Panc1 (cell line): ENCODE measurements at regions of chr4 and their contacts with region 1.

Region 1: GRCh38 chr4:76758290-76758882 is 139.6 kb downstream of the SOWAHB start:
- DNase-seq: no peak
- ATAC-seq: no peak
- H3K4me3 ChIP-seq: no peak overlapping the region
- H3K27ac ChIP-seq: no peak overlapping the region
- H3K4me1 ChIP-seq: no peaks in the 10 kb centered on the region; the same call in 1 of the 2 replicates
- H3K27me3 ChIP-seq: no peaks in the 10 kb centered on the region
- CTCF ChIP-seq: peak; percentile 79

Region 2: DNA sequence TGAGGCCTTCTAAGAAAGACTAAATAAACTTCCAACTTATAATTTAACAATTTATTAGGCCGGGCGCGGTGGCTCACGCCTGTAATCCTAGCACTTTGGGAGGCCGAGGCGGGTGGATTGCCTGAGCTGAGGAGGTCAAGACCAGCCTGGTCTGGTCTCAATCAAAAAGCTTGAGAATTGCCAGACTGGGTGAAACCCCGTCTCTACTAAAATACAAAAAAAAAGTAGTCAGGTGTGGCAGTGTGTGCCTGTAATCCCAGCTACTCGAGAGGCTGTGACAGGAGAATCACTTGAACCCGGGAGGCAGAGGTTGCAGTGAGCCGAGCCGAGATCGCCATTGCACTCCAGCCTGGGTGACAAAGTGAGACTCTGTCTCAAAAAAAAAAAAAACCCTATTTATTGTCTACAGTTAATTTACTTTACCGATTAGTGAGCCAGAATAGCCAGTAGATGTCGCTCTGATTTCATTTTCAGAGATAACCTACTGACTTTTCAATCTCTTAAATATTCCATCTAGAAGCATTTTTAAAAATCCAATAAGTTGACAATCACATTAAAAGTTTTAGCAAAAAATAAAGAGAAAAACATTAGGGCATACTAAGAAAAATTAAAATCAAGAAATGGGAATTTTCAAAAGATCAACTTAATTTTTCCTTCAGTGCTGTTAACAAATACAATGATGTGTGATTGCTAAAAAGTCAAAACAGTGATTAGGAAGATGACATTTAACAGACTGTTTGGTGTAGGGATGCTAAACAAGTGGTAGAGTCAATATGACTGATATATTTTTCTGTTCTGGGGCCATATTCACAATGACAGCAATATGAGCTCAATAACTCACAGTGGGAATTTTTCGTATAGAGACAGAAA is 327.6 kb before region 1 on chr4:
- CTCF ChIA-PET with region 1: no interaction called
- POLR2A ChIA-PET with region 1: no interaction called
- in situ Hi-C with region 1: no loop called
- intact Hi-C with region 1: loop called (anchors 10 kb)
- DNase-seq: peak; percentile 10
- ATAC-seq: no peak
- H3K4me3 ChIP-seq: no peak overlapping the region
- H3K27ac ChIP-seq: no peak overlapping the region
- H3K4me1 ChIP-seq: no peaks in the 10 kb centered on the region
- H3K27me3 ChIP-seq: no peaks in the 10 kb centered on the region
- CTCF ChIP-seq: peak; percentile 76

Region 3: DNA sequence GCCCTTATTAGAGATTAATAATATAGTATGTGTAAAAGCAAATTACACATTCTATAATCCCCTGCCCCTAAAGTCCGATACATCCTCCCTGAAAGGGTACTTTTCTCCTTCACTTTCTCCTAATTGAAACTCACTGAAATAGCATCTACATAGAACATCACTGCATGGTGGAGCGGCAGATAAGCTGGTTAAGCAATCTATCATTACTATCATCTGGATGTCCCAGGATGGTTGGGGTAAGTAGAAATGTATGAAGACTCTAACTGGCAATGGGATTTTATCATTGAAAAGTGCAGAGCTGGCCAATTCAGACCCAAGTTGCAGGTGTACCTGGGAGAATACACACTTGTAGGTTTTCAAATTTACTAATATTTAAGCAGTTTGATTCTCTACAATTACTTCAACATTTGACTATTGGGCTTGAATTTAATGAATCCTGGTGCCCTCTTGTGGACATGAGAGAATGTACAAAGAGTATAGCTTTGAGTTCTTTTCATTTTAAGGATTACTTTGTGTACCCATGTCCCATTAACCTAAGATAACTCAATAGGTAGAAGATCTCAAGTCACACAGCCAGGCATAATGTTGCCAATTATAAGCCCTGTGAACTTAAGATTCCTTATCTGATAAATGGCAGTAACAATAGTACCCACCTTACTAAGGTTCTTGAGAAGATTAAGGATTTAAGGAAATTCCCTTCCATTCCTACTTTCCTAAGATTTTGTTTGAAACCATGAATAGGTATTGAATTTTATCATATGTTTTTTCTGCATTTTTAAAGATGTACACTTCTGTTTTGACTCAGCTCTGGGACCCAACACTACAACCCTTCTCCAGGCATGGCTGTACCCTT is 253.5 kb before region 1 on chr4:
- CTCF ChIA-PET with region 1: interaction called, 15 read pairs
- POLR2A ChIA-PET with region 1: no interaction called
- in situ Hi-C with region 1: no loop called
- intact Hi-C with region 1: no loop called
- DNase-seq: no peak
- ATAC-seq: 0 out of 2 replicates have a peak, but pooled peaks have one; percentile 68
- H3K4me3 ChIP-seq: no peak overlapping the region
- H3K27ac ChIP-seq: no peak overlapping the region
- H3K4me1 ChIP-seq: no peaks in the 10 kb centered on the region
- H3K27me3 ChIP-seq: peaks cover 3% of the 10 kb centered on the region
- CTCF ChIP-seq: peak; percentile 64; the same call in 1 of the 2 replicates